ENCODE measurements at regions of chr20 and their contacts with region 1.

Region 1: GRCh38 chr20:17504898-17505635 is 26.1 kb downstream of the BFSP1 start:
- DNase-seq: peak; percentile 58
- ATAC-seq: peak; percentile 83
- H3K4me3 Mint-ChIP-seq: peak overlapping the region; percentile 72
- H3K27ac Mint-ChIP-seq: no peak overlapping the region; the same call in 1 of the 2 replicates
- H3K4me1 Mint-ChIP-seq: peaks cover 16% of the 10 kb centered on the region
- H3K27me3 Mint-ChIP-seq: peaks cover 10% of the 10 kb centered on the region
- CTCF ChIP-seq: peak; percentile 29; the same call in 1 of the 2 replicates

Region 2: GRCh38 chr20:17530716-17531664 is 25.9 kb after region 1 on chr20 and contains the start of gene BFSP1:
- CTCF ChIA-PET with region 1: interaction called, 11 read pairs
- POLR2A ChIA-PET with region 1: no interaction called
- DNase-seq: peak; percentile 74
- ATAC-seq: peak; percentile 69
- H3K4me3 Mint-ChIP-seq: peak within 1 kb of the TSS; percentile 82
- H3K27ac Mint-ChIP-seq: peak within 1 kb of the TSS; percentile 85; the same call in 1 of the 2 replicates
- H3K4me1 Mint-ChIP-seq: peaks cover 26% of the 10 kb centered on the region
- H3K27me3 Mint-ChIP-seq: peaks cover 22% of the 10 kb centered on the region
- CTCF ChIP-seq: no peak
- total RNA-seq, gene BFSP1: 1.9 to 3.0 TPM (median 2.7 TPM) in 3 replicates

Region 3: DNA sequence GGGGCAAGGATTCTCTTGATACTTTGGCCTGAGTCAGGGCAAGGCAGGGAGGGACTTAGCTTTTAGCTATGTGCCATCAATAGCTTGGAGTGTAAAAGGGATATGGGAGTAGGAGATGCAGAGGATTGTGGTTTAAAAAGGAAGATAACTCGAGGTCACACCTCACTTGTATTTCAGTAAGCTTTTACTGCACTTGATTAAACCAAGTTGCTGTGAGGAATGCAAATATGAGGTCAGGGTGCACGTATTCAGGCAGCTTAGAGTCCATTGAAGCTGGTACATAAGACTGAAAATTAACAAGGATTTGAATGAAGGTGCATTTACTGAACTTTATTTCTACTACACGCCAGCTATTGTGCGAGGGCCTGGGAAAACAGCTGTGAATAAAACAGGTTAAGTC is 96.9 kb after region 1 on chr20:
- CTCF ChIA-PET with region 1: interaction called, 11 read pairs
- POLR2A ChIA-PET with region 1: no interaction called
- DNase-seq: no peak
- ATAC-seq: no peak; the same call in 1 of the 2 replicates
- H3K4me3 Mint-ChIP-seq: no peak overlapping the region
- H3K27ac Mint-ChIP-seq: peak overlapping the region; percentile 75
- H3K4me1 Mint-ChIP-seq: peaks cover 33% of the 10 kb centered on the region
- H3K27me3 Mint-ChIP-seq: no peaks in the 10 kb centered on the region
- CTCF ChIP-seq: no peak

Measured in WTC11 (cell line).